ENCODE measurements at regions of chr16 and their contacts with region 1.

Region 1: GRCh38 chr16:66728117-66728787 is 23.2 kb downstream of the DYNC1LI2 start:
- DNase-seq: peak in 1 of 2 experiments; percentile 35
- H3K4me3 ChIP-seq: no peak overlapping the region
- H3K4me3 Mint-ChIP-seq: no peak overlapping the region
- H3K27ac Mint-ChIP-seq: no peak overlapping the region
- H3K4me1 ChIP-seq: no peaks in the 10 kb centered on the region
- H3K4me1 Mint-ChIP-seq: peaks cover 6% of the 10 kb centered on the region
- H3K27me3 ChIP-seq: no peaks in the 10 kb centered on the region
- H3K27me3 Mint-ChIP-seq: no peaks in the 10 kb centered on the region
- CTCF ChIP-seq: peak; percentile 47 to 67

Region 2: DNA sequence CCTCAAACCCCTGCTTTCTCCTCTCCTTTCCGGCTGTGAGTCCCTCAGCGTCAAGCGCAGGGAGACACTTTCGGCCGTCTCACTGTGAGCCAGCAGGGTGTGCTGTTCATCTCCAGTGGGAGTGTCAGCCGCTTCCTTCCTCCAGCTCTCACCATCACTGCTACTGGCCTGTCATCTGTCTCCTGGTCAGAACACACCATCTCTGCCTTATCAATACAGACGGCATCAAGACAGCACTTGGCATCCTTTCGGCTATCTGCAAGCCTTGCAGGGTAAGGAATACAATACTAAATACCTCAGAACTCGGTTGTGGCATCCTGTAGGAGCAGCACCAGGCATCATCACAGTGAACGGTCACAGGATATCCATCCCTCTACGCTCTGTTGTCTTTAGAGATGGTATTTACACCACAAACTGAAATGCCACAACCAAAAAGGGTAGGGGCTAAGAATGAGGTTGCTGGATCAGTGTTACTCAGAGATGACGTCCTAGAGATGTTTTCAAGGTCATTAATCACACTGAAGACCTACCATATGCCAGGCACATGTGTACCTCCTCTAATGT is 11.1 kb before region 1 on chr16:
- CTCF ChIA-PET with region 1: interaction called, 3 read pairs
- POLR2A ChIA-PET with region 1: no interaction called
- intact Hi-C with region 1: loop called (anchors 1 kb)
- DNase-seq: peak; percentile 48 to 58
- H3K4me3 ChIP-seq: no peak overlapping the region
- H3K4me3 Mint-ChIP-seq: no peak overlapping the region
- H3K27ac Mint-ChIP-seq: no peak overlapping the region
- H3K4me1 ChIP-seq: peaks cover 23% of the 10 kb centered on the region
- H3K4me1 Mint-ChIP-seq: peaks cover 10% of the 10 kb centered on the region
- H3K27me3 ChIP-seq: no peaks in the 10 kb centered on the region
- H3K27me3 Mint-ChIP-seq: no peaks in the 10 kb centered on the region
- CTCF ChIP-seq: peak; percentile 38 to 65

Region 3: GRCh38 chr16:66947302-66948065 is 219.2 kb after region 1 on chr16:
- CTCF ChIA-PET with region 1: no interaction called
- POLR2A ChIA-PET with region 1: no interaction called
- intact Hi-C with region 1: no loop called
- DNase-seq: peak; percentile 81 to 87
- H3K4me3 ChIP-seq: no peak overlapping the region
- H3K4me3 Mint-ChIP-seq: peak overlapping the region; percentile 40
- H3K27ac Mint-ChIP-seq: peak overlapping the region; percentile 48
- H3K4me1 ChIP-seq: no peaks in the 10 kb centered on the region
- H3K4me1 Mint-ChIP-seq: no peaks in the 10 kb centered on the region
- H3K27me3 ChIP-seq: no peaks in the 10 kb centered on the region
- H3K27me3 Mint-ChIP-seq: no peaks in the 10 kb centered on the region
- CTCF ChIP-seq: peak; percentile 82 to 87

Measured in Caco-2 (cell line).